ENCODE measurements at regions of chr11 and their contacts with region 1.

Region 1: GRCh38 chr11:5643585-5643984 is 18.8 kb downstream of the TRIM34 start:
- DNase-seq: no peak
- H3K4me3 Mint-ChIP-seq: no peak overlapping the region
- H3K27ac Mint-ChIP-seq: no peak overlapping the region
- H3K4me1 Mint-ChIP-seq: peaks cover 9% of the 10 kb centered on the region
- H3K27me3 Mint-ChIP-seq: no peaks in the 10 kb centered on the region

Region 2: GRCh38 chr11:5624489-5625279 is 18.9 kb before region 1 on chr11 and contains the start of gene TRIM34:
- intact Hi-C with region 1: loop called (anchors 2 kb)
- DNase-seq: peak; percentile 68
- H3K4me3 Mint-ChIP-seq: peak within 1 kb of the TSS; percentile 91
- H3K27ac Mint-ChIP-seq: peak within 1 kb of the TSS; percentile 79
- H3K4me1 Mint-ChIP-seq: peaks cover 47% of the 10 kb centered on the region
- H3K27me3 Mint-ChIP-seq: no peaks in the 10 kb centered on the region
- total RNA-seq, gene TRIM34: 4.6 and 5.4 TPM in 2 replicates

Measured in activated T-helper 1 cell treated with anti-CD3 and anti-CD28 coated beads, Interleukin-12 subunit alpha, Interleukin-12 subunit beta, Interleukin-2, Interleukin-4 antibody, amounts not matched to agents 30 ng/mL and 10 ng/mL and 1 ng/mL, durations not matched to agents 14 hours and 24 hours and 36 hours (primary cell).